Mammary epithelial cell (primary cell): ENCODE measurements at regions of chr10 and their contacts with region 1.

Region 1: DNA sequence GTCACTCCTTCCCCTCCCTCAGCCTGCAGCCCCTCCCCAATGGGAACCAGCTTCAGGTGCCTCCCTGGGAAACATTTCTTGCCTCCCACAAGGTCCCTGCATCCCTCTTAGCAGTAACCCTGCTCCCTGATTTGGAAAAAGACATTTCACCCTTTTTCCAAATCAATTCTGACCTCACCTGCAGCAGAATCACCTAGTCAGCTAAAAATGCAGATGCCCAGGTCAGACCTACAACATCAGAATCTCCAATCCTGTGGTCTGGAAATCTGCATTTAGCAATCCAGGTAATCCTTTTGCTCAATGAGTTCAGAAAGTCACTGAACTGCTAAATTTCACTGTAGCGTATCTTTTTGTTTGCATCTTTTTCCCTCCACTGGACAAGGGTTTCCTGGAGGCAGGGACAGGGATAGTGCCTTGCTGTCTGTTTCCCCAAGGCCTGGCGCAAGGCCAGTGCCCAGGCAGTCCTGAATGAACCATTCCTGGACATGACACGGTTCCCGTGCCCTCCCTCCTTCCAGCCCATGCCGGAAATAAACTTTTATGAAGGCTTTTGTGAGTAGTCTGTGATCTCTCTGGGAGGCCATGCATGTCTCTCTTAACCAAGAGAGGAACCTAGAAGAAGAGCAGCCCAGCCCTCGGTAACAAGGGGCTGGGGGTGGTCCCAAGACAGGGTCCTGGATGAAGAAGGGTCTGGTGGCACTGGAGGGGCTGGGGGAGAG is 44.0 kb downstream of the COL13A1 start:
- DNase-seq: peak; percentile 28
- H3K4me3 ChIP-seq: no peak overlapping the region
- H3K27ac ChIP-seq: no peak overlapping the region
- H3K4me1 ChIP-seq: peaks cover 5% of the 10 kb centered on the region
- H3K27me3 ChIP-seq: no peaks in the 10 kb centered on the region
- CTCF ChIP-seq: no peak

Region 2: DNA sequence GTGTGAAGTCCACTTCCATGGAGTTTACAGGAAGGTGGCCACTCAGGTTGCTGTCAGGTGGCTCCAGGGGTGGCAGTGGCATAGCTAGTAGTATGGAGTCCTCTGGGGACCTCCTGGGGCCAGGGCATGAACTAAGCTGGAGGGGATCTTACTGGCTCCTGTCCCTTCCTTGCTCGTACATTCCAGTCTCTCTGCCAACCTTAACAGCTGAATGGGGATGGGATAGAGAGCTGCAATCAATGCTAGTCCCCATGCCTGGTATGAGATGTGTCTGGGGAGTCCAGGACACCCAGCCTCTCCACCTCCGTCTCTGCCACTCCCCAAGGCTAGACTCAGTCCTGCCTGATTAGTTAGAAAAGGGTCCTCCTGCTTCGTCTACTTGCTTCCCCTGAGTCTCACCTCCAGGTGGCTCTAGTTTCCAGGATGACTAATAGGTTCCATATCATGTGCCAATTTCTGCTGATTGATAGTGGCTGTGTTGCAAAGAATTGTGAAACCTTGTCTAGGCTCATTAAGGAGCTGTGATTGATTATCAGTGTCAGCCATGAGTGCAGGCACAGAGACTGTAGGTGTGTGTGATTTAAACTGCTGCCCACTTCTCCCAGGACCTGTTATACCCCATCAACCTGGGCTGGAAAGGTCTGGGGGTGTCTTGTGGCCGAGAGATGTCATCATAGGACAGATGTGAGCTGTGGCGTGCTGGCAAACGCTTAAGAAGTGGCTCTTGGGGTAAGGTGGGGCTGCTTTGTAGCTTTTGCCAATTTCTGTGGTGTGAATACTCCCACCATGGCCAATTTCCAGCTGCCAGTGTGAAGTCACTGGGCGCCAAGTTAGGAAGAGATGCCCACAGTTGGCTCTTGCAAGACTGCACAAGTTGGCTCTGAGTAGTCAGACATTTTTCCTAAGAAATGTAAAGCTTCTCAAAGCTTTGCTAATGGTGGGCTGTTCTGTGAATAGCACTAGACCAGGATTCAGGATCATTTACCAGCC is 15.8 kb after region 1 on chr10:
- CTCF ChIA-PET with region 1: no interaction called
- dilution Hi-C with region 1: no loop called
- in situ Hi-C with region 1: no loop called
- intact Hi-C with region 1: loop called (anchors 2 kb)
- DNase-seq: peak; percentile 92
- H3K4me3 ChIP-seq: no peak overlapping the region
- H3K27ac ChIP-seq: peak overlapping the region; percentile 68
- H3K4me1 ChIP-seq: peaks cover 55% of the 10 kb centered on the region
- H3K27me3 ChIP-seq: no peaks in the 10 kb centered on the region
- CTCF ChIP-seq: peak; percentile 55 to 67

Region 3: GRCh38 chr10:70074165-70074564 is 228.4 kb after region 1 on chr10:
- CTCF ChIA-PET with region 1: no interaction called
- dilution Hi-C with region 1: no loop called
- in situ Hi-C with region 1: no loop called
- intact Hi-C with region 1: no loop called
- DNase-seq: no peak
- H3K4me3 ChIP-seq: no peak overlapping the region
- H3K27ac ChIP-seq: no peak overlapping the region
- H3K4me1 ChIP-seq: no peaks in the 10 kb centered on the region
- H3K27me3 ChIP-seq: no peaks in the 10 kb centered on the region
- CTCF ChIP-seq: no peak

Region 4: GRCh38 chr10:70589762-70590654 is 744.3 kb after region 1 on chr10:
- CTCF ChIA-PET with region 1: no interaction called
- dilution Hi-C with region 1: no loop called
- in situ Hi-C with region 1: no loop called
- intact Hi-C with region 1: no loop called
- DNase-seq: no peak
- H3K4me3 ChIP-seq: no peak overlapping the region
- H3K27ac ChIP-seq: no peak overlapping the region
- H3K4me1 ChIP-seq: no peaks in the 10 kb centered on the region
- H3K27me3 ChIP-seq: peaks cover 16% of the 10 kb centered on the region
- CTCF ChIP-seq: no peak

Region 5: GRCh38 chr10:71112138-71112785 is 1266.5 kb after region 1 on chr10:
- CTCF ChIA-PET with region 1: no interaction called
- dilution Hi-C with region 1: no loop called
- in situ Hi-C with region 1: no loop called
- intact Hi-C with region 1: no loop called
- DNase-seq: no peak
- H3K4me3 ChIP-seq: no peak overlapping the region
- H3K27ac ChIP-seq: no peak overlapping the region
- H3K4me1 ChIP-seq: no peaks in the 10 kb centered on the region
- H3K27me3 ChIP-seq: no peaks in the 10 kb centered on the region
- CTCF ChIP-seq: no peak